Gastrocnemius medialis (tissue), 4 donors: ENCODE measurements at regions of chr3 and their contacts with region 1.

Region 1: GRCh38 chr3:57755668-57756527 is at the start of gene SLMAP:
- DNase-seq: peak; percentile 98 to 99
- ATAC-seq: peak; percentile 94 to 95
- H3K4me3 ChIP-seq: peak within 1 kb of the TSS; percentile 86 to 98 (median 96)
- H3K27ac ChIP-seq: peak within 1 kb of the TSS; percentile 96 to 99 (median 98)
- H3K4me1 ChIP-seq: peaks cover 32 to 37% of the 10 kb centered on the region in 2 donors
- H3K27me3 ChIP-seq: no peaks in the 10 kb centered on the region
- CTCF ChIP-seq: peak in 2 of 5 experiments; percentile 4 to 10
- POLR2A ChIP-seq: peak; percentile 80 to 86
- total RNA-seq, gene SLMAP: 81.1 to 113 (median 97.1) TPM

Region 2: DNA sequence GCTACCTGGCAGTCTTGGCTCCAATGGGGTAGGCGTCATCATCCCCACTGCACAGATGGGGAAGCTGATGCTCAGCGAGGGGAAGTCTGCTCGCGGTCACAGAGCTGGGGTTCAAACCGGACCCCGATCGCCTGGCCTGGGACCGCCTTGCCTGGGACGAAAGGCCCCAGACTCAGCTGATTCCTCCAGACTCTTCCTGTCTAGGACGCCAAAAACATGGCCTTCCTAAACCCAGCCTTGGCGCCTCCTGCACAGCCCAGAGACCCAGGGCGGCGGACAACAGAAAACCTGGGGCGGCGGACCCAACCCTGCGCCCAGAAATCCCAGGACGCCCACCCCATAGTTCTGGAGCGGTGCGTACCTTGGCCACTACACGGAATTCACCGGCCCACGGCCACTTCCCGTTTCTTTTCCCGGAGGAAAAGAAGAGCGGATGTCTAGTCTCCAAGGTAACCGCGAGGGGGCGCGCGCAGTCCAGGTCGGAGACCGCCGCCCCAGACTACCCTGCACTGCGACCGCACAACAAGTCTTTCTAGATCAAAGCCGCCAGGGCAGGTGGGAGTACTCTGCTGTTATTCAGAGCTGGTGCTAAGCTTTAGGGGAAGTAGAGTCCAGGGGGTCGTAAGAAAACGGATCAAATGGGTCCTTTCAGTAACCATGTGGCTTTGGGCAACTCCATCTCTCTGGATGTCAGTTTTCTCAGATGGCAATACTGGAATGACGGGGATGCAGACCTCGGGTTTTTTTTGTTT is 585.9 kb before region 1 on chr3:
- in situ Hi-C with region 1: no loop called
- intact Hi-C with region 1: loop called (anchors 10 kb)
- DNase-seq: peak; percentile 40 to 56
- ATAC-seq: peak; percentile 70 to 85
- H3K4me3 ChIP-seq: peak overlapping the region; percentile 49 to 56 (median 52)
- H3K27ac ChIP-seq: no peak overlapping the region
- H3K4me1 ChIP-seq: no peaks in the 10 kb centered on the region
- H3K27me3 ChIP-seq: no peaks in the 10 kb centered on the region
- CTCF ChIP-seq: peak; percentile 47 to 90 (median 83)
- POLR2A ChIP-seq: no peak

Region 3: DNA sequence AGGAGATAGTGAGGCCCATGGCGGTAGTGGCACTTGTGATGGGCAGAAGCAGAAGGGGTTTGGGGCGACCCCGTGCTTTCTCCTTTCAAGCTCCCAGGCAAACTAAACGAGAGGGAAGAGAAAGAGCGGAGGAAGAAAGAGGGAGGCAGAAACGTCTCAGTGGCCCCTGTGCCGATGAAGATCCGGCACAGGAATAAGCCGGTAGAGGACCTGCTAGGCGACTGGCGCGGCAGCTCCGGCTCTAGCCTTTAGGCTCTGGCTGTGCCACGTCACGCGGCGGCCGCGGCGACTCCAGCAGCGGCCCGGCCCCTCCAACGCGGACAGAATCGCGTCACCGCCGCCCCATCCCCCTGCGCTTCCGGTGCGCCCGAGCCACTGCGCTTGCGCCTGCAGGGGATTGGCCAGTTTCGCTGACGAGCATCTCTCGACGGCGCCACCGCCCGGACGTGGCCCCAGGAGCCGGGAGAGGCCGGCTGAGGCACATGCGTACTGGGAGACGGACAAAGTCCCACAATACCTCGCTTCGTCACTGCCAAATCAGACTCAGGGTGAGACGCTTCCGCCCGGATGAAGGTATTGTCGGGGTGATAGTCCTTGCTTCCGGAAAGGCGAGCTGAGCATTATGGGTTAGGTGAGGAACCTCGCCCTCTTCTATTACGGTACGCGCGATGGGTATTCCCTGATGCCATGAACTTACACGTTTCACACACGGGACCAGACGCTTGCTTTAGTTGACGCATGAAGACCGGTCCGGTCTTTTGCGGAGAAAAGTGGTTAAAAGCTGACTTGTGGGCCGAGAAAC is 158.6 kb before region 1 on chr3 and contains the start of gene ARF4:
- in situ Hi-C with region 1: loop called in 2 of 4 experiments (anchors 5 to 10 kb)
- intact Hi-C with region 1: loop called (anchors 1 kb)
- DNase-seq: peak; percentile 99 to 100
- ATAC-seq: peak; percentile 92 to 94
- H3K4me3 ChIP-seq: peak within 1 kb of the TSS; percentile 72 to 96 (median 92)
- H3K27ac ChIP-seq: peak within 1 kb of the TSS; percentile 95 to 99 (median 98)
- H3K4me1 ChIP-seq: peaks cover 44 to 48% of the 10 kb centered on the region in 2 donors
- H3K27me3 ChIP-seq: no peaks in the 10 kb centered on the region
- CTCF ChIP-seq: peak in 2 of 5 experiments; percentile 7 to 8
- POLR2A ChIP-seq: peak; percentile 97 to 98
- total RNA-seq, gene ARF4: 36.2 to 55.2 (median 47.7) TPM

Region 4: DNA sequence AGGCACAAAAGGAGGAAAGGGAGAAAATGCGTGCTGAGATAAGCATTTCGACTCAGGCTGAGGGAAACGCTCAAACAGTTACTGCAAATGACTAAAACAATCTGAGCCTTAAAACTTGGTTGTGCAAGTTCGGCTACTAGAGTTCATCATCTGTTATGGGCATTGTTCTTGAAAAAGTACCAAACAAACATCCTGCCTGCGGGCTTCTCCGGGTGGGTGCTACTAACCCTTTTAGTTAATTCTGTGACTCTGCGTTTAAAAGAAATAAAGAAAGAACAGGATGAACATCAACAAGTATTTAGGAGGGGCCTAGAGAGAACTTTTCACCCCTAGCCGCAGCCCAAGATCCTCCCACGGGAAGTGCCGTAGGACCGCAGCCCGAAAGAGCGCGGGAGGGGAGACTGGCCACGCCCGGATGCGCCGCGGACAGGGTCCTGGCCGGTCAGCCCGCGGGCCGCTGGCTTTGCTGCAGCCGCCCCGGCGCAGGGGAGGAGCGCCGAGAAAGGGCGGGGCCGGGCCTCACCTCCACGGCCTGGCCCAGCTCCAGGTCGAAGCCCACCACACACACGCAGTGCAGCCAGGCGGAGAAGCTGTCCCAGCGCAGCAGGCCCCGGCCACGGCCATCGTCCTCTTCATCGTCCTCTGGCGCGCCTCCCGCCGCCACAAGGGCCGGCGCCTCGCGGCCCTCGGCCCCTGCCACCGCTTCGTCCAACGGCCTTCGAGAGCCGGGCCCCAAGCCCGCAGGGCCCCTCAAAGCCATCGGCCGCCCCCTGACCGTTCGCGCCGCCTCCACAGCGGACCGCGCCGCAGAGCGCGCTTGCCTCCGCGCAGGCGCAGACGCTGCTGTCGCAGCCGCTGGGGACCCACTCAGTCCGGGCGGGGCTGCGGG is 63.4 kb before region 1 on chr3 and contains the start of gene DENND6A:
- in situ Hi-C with region 1: loop called (anchors 5 to 10 kb)
- intact Hi-C with region 1: loop called (anchors 1 kb)
- DNase-seq: peak; percentile 74 to 79
- ATAC-seq: peak; percentile 61 to 72
- H3K4me3 ChIP-seq: peak within 1 kb of the TSS; percentile 67 to 98 (median 83)
- H3K27ac ChIP-seq: peak within 1 kb of the TSS; percentile 87 to 100 (median 94)
- H3K4me1 ChIP-seq: peaks cover 37 to 43% of the 10 kb centered on the region in 2 donors
- H3K27me3 ChIP-seq: no peaks in the 10 kb centered on the region
- CTCF ChIP-seq: peak in 1 of 5 experiments; percentile 45
- POLR2A ChIP-seq: peak; percentile 98
- total RNA-seq, gene DENND6A: 6.4 to 18.9 (median 14.9) TPM

Region 5: DNA sequence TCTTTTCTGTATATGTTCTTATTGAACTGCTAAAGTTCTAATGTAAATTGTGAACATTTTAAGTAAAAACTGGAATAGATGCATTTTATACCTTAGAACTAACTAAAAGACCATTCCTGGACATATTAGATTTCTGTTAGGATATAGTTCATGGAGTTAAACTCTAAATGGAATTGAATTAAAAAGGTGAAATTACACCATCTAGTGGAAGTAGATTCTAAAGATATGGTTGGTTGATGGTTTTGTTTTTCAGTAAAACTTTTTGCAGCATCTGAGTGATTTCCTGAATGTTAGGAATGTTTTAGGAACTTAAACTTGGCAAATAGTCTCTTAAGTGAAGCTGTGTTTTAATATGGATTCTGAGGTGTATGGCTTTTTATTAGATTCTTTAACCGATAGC is 97.0 kb after region 1 on chr3:
- in situ Hi-C with region 1: no loop called
- intact Hi-C with region 1: no loop called
- DNase-seq: no peak
- ATAC-seq: no peak
- H3K4me3 ChIP-seq: no peak overlapping the region
- H3K27ac ChIP-seq: no peak overlapping the region
- H3K4me1 ChIP-seq: no peaks in the 10 kb centered on the region
- H3K27me3 ChIP-seq: no peaks in the 10 kb centered on the region
- CTCF ChIP-seq: no peak
- POLR2A ChIP-seq: no peak

Region 6: DNA sequence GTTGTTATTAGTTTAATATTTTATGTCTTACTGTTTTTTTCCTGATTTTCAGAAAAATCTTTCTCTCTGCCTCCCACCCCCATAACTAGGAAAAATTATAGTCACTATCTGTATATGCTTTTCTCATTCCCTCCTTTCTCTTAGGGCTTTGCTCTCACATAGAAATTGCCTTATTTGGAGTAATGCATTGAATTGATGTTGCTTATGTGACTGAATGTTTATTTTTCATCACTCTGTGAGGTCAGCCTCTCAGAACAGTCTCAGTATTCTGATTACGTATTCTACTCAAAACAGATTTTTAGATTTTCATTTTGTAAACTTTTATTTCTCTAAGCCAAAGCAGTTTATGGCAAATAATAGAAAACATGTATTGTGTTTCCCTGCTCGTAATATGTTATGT is 121.2 kb after region 1 on chr3:
- in situ Hi-C with region 1: no loop called
- intact Hi-C with region 1: no loop called
- DNase-seq: no peak
- ATAC-seq: no peak
- H3K4me3 ChIP-seq: no peak overlapping the region
- H3K27ac ChIP-seq: no peak overlapping the region
- H3K4me1 ChIP-seq: peaks cover 4 to 11% of the 10 kb centered on the region in 2 donors
- H3K27me3 ChIP-seq: no peaks in the 10 kb centered on the region
- CTCF ChIP-seq: no peak
- POLR2A ChIP-seq: no peak

Region 7: GRCh38 chr3:57903124-57903890 is 147.4 kb after region 1 on chr3:
- in situ Hi-C with region 1: no loop called
- intact Hi-C with region 1: loop called (anchors 5 kb)
- DNase-seq: no peak
- ATAC-seq: peak; percentile 21 to 73
- H3K4me3 ChIP-seq: no peak overlapping the region
- H3K27ac ChIP-seq: peak overlapping the region; percentile 12 to 64 (median 44)
- H3K4me1 ChIP-seq: peaks cover 14 to 32% of the 10 kb centered on the region in 2 donors
- H3K27me3 ChIP-seq: no peaks in the 10 kb centered on the region
- CTCF ChIP-seq: no peak
- POLR2A ChIP-seq: no peak

Region 8: DNA sequence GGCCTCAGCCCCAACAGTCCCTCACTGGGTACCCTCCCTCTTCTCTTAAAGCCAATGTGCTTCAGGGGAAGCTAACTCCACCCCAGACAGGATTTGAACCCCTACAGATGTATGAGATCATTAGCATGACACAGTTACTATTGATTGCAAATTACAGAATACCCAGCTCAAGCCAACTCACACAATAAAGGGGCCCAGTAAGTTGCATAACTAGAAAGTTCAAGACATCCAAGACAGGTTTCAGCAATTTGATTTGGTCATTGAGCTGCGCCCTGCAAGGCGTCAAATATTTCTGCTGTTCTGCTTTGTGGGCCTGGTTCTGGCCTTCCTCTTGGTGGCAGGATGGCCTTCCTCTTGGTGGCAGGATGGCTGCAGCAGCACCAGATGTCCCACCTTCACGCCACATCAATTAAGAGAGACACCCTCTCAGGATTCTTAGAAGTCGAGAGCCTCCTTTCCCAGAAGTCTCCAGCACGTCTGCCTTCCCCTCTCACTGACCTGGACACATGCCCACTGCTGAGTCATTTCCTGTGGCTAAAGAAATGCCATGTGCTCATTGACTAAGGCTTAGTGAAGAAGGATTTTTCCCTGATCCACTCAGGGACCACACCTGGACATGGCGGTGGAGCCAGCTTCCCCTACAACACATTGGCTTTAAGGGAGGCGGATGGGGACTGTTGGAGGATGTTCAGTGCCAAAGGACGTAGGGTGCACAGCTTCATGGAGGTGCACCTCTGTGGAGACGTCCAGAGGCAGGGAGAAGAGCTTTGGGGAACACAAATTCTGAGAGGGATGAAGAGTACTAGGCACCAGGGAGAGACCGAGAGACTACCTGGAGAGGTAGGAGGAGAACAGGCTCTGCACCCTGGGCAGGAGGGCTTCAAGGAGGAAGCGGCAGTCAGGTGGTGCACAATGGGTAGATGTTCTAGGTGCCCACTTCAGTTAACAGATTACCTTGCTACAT is 405.8 kb after region 1 on chr3:
- in situ Hi-C with region 1: no loop called
- intact Hi-C with region 1: no loop called
- DNase-seq: peak in 1 of 2 donors; percentile 37
- ATAC-seq: peak; percentile 42 to 44
- H3K4me3 ChIP-seq: no peak overlapping the region
- H3K27ac ChIP-seq: peak overlapping the region in 1 of 4 donors; percentile 28
- H3K4me1 ChIP-seq: peaks cover 0 to 2% of the 10 kb centered on the region in 2 donors
- H3K27me3 ChIP-seq: no peaks in the 10 kb centered on the region
- CTCF ChIP-seq: no peak
- POLR2A ChIP-seq: no peak

Region 9: DNA sequence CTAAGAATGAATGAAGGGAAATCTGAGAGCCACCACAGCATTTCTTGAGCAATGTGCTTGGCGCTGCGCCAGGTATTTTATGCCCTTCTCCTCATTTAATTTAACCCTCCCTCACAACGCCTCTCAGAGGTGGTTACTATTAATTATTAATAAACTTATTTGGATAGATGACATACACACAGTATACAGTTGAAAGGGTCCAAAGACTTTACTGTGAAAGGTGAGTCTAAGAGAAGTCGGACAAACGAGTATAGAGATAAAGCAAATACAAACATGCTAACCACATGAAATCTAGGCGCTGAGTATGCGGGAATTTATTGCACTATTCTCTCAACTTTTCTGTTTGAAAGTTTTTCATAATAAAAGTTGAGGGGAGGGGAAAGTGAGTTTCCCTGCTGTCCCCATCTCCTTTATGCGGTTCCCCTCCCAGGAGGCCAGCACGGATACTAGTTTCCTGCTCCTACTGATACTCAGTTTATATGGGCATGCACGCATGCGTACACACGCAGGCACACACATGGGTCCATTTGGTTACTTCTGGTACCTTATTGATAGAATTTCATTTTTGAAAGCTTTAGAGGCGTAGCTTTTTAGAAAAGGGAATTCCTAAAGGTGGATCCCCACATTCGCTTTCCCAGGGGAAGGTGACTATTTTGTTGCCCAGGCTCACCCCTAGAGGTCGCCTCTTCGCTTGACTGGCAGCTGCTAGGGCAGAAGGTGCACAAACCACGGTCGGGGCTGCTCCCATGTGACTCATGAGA is 707.5 kb after region 1 on chr3:
- in situ Hi-C with region 1: no loop called
- intact Hi-C with region 1: no loop called
- DNase-seq: peak; percentile 54 to 71
- ATAC-seq: peak; percentile 88 to 93
- H3K4me3 ChIP-seq: peak overlapping the region; percentile 12 to 50 (median 42)
- H3K27ac ChIP-seq: peak overlapping the region; percentile 22 to 61 (median 52)
- H3K4me1 ChIP-seq: peaks cover 17 to 18% of the 10 kb centered on the region in 2 donors
- H3K27me3 ChIP-seq: no peaks in the 10 kb centered on the region
- CTCF ChIP-seq: peak; percentile 65 to 83 (median 74)
- POLR2A ChIP-seq: no peak